Left ventricle myocardium inferior (tissue), 1 donor: ENCODE measurements at regions of chr5 and their contacts with region 1.

Region 1: DNA sequence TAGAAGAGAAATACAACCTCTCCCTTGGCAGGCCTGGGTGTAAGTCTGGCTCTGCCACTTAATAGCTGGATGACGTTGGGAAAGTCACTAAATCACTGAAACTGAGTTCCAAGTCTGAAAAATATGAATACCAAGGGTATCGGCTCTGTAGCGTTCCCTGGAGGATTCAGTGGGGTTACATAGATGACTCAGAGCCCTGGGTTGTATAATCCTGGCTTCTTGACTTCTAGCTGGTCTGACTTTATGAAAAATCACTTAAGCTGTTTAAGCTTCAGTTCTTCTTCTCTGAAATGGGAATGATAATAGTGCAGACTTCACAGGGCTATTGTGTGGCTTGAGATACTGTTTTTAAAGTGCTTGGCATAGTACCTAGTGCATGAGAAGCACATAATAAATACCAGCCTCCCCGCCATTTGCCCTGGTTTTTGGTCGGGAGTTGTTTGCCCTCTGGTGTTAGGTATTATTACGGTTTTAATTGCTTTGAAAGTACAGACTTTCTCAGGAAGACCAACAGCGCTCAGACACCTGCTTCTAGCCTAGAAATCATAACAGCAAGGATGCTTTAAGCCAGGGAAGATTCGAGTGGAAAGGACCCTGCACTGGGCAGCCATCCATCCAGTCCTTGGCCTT is 43.0 kb downstream of the CYFIP2 start:
- DNase-seq: no peak
- H3K4me3 ChIP-seq: no peak overlapping the region
- H3K27ac ChIP-seq: no peak overlapping the region
- H3K4me1 ChIP-seq: peaks cover 24% of the 10 kb centered on the region
- H3K27me3 ChIP-seq: no peaks in the 10 kb centered on the region
- CTCF ChIP-seq: peak; percentile 43

Region 2: GRCh38 chr5:157214861-157215513 is 94.0 kb before region 1 on chr5:
- intact Hi-C with region 1: no loop called
- DNase-seq: no peak
- H3K4me3 ChIP-seq: no peak overlapping the region
- H3K27ac ChIP-seq: no peak overlapping the region
- H3K4me1 ChIP-seq: peaks cover 8% of the 10 kb centered on the region
- H3K27me3 ChIP-seq: no peaks in the 10 kb centered on the region
- CTCF ChIP-seq: no peak

Region 3: DNA sequence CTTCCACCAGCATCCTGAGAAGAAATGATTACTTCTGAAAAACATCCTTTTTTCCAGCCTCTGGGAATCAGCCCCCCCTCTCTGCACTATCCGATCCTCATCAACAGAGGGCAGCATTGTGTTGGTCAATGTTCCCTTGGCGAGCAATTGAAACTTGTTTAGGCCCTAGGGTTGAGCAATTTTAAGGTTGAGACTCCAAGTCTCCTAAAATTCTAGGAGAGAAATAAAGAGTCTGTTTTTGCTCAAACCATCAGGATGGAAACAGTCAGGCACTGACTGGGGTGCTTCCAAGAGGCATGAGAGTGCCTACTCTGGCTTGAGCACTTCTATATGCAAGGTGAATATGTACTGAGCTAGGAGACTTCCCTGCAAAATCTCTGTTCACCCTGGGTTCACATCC is 55.4 kb before region 1 on chr5:
- intact Hi-C with region 1: loop called (anchors 5 kb)
- DNase-seq: no peak
- H3K4me3 ChIP-seq: no peak overlapping the region
- H3K27ac ChIP-seq: no peak overlapping the region
- H3K4me1 ChIP-seq: no peaks in the 10 kb centered on the region
- H3K27me3 ChIP-seq: peaks cover 4% of the 10 kb centered on the region
- CTCF ChIP-seq: peak; percentile 86

Region 4: DNA sequence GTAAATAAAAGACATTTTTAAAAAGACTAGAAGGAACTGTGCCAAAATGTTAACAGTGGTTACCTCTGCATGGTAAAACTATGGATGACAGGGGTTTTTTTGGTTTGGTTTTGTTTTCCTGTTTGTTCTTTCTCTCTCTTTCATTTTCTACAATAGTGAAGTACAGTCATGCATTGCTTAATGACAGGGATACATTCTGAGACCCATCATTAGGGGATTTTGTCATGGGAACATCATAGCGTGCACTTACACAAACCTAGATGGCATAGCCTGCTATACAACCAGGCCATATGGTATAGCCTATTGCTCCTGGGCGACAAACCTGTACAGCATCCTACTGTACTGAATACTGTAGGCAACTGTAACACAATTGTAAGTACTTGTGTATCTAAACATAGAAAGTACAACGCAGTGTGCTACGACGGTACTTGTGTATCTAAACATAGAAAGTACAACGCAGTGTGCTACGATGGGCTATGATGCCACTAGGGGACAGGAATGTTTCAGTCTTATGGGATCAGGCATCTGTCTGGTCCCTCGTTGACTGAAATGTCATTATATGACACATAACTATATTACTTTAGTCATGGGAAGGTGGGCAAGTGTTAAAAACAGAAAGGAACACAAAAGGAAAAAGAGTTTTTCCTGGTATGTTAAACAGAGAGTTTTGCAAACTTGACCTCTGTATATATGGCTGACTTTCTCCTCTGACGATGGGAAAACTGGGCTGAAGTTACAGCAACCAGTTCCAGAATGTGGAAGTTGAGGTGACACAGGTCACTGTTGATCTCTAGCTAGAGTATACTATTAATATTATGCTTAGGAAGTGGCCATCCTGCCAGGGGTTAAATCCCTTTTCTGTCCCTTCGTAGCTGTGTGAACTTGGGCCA is 274.0 kb after region 1 on chr5:
- intact Hi-C with region 1: no loop called
- DNase-seq: no peak
- H3K4me3 ChIP-seq: no peak overlapping the region
- H3K27ac ChIP-seq: peak overlapping the region; percentile 27
- H3K4me1 ChIP-seq: peaks cover 13% of the 10 kb centered on the region
- H3K27me3 ChIP-seq: no peaks in the 10 kb centered on the region
- CTCF ChIP-seq: peak; percentile 28